Endothelial cell of umbilical vein (primary cell): ENCODE measurements at regions of chr4 and their contacts with region 1.

Region 1: GRCh38 chr4:139754938-139755337 is 89.3 kb downstream of the MGST2 start:
- DNase-seq: no peak
- H3K4me3 ChIP-seq: no peak overlapping the region
- H3K27ac ChIP-seq: no peak overlapping the region
- H3K4me1 ChIP-seq: no peaks in the 10 kb centered on the region
- H3K27me3 ChIP-seq: no peaks in the 10 kb centered on the region
- CTCF ChIP-seq: no peak
- POLR2A ChIP-seq: no peak

Region 2: DNA sequence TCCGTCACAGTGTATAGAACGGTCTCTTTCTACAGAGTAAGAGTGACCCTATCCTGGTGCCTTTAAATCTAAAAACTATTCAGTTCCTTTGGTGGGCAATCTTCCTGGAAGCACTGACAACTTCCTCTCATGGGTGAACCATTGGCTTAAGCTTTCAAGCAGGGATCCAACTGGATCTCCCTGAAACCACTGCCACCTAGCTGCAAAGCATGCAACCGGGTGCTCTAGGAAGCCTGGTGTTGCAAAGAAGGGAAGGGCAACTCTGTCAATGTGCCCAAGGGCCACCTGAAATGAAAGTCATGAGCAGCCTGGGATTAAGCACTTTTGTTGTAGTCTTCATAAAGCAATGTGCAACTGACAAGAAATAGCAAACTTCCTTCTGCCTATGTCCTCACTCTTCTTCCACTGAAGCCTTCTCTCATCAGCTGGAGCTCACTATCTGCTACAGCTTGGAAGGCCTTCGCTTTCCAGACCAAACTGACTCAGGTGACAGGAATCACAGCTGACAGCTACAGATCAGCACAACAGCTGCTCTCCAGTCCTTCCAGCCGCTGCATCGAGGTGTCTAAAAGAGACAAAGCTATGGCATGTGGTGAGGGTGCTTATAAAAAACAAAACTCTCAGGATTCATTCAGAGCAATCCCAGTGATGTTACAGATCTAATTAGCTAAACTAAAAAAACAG is 245.1 kb before region 1 on chr4:
- CTCF ChIA-PET with region 1: no interaction called
- POLR2A ChIA-PET with region 1: no interaction called
- dilution Hi-C with region 1: no loop called
- intact Hi-C with region 1: no loop called
- DNase-seq: peak; percentile 45
- H3K4me3 ChIP-seq: no peak overlapping the region
- H3K27ac ChIP-seq: no peak overlapping the region
- H3K4me1 ChIP-seq: peaks cover 7% of the 10 kb centered on the region
- H3K27me3 ChIP-seq: no peaks in the 10 kb centered on the region
- CTCF ChIP-seq: peak; percentile 16 to 38
- POLR2A ChIP-seq: no peak

Region 3: DNA sequence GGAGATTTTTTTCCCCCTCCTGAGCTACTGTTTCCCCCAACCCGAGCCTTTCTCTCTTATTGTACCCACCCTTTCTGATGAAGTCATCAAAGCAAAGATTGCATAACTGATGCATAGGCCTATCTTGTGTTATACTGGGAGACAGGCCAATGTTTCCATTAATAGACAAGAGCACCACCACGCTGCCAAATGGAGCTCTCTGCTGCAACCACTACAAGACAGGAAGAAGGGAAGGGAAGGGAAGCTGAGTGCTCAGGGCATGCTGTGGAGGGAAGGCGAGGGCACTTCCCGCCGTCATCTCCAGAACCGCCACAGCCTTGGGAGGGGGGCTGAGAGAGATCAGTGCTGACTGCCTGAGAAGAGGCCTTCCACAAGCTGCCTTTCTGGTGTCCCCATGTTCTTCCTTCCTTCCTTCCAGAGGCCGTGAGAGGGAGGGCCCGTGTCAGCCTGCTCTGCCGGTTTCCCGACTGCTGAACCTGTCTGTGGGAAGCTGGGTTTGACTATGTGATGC is 14.4 kb before region 1 on chr4:
- CTCF ChIA-PET with region 1: interaction called, 16 read pairs
- POLR2A ChIA-PET with region 1: no interaction called
- dilution Hi-C with region 1: no loop called
- intact Hi-C with region 1: no loop called
- DNase-seq: peak; percentile 92
- H3K4me3 ChIP-seq: no peak overlapping the region
- H3K27ac ChIP-seq: peak overlapping the region; percentile 42
- H3K4me1 ChIP-seq: peaks cover 15% of the 10 kb centered on the region
- H3K27me3 ChIP-seq: no peaks in the 10 kb centered on the region
- CTCF ChIP-seq: no peak
- POLR2A ChIP-seq: no peak